ENCODE measurements at regions of chr6 and their contacts with region 1.

Region 1: DNA sequence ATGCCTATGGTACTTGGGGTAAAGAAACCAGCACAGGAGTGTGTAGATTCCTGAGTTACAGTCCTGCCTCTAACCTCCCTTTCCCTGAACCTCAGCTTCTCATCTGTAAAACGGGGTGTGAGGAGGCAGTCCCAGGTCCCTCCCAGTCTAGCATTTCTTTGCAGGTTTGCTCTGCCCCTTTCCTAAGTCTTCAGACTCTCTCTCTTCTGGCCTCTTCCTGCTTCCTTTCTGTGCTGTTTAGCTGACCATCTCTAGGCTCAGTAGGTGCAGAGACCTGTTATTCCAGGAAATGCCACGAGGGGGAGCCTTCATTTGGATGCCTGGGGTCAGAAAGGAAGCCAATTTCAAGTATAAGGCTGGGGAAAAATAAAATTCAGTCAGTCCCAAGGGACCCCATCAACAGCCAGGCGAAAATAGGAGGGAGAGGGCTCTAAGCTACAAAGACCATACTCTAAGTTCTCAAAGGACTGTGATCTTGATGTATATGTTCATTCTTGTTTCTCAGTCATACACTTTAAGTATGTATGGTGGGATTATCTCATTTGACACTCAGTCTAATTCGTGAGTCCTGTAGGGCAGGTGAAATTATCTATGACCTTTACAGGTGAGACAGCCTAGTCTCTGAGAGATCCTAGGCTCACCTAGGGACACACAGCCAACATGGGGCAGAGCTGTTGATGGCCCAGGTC is 89.1 kb downstream of the NCR2 start:
- DNase-seq: peak; percentile 95
- H3K4me3 Mint-ChIP-seq: no peak overlapping the region
- H3K27ac Mint-ChIP-seq: no peak overlapping the region
- H3K4me1 Mint-ChIP-seq: peaks cover 2% of the 10 kb centered on the region
- H3K27me3 Mint-ChIP-seq: peaks cover 27% of the 10 kb centered on the region
- CTCF ChIP-seq: peak; percentile 90

Region 2: GRCh38 chr6:41406728-41407489 is 17.6 kb before region 1 on chr6:
- CTCF ChIA-PET with region 1: no interaction called
- intact Hi-C with region 1: no loop called
- DNase-seq: no peak
- H3K4me3 Mint-ChIP-seq: no peak overlapping the region
- H3K27ac Mint-ChIP-seq: no peak overlapping the region
- H3K4me1 Mint-ChIP-seq: no peaks in the 10 kb centered on the region
- H3K27me3 Mint-ChIP-seq: peaks cover 58% of the 10 kb centered on the region
- CTCF ChIP-seq: no peak

Region 3: GRCh38 chr6:41442800-41443501 is 18.4 kb after region 1 on chr6:
- CTCF ChIA-PET with region 1: interaction called, 11 read pairs
- intact Hi-C with region 1: no loop called
- DNase-seq: peak; percentile 61
- H3K4me3 Mint-ChIP-seq: peak overlapping the region; percentile 31
- H3K27ac Mint-ChIP-seq: no peak overlapping the region
- H3K4me1 Mint-ChIP-seq: peaks cover 15% of the 10 kb centered on the region
- H3K27me3 Mint-ChIP-seq: peaks cover 67% of the 10 kb centered on the region
- CTCF ChIP-seq: peak; percentile 82

Region 4: DNA sequence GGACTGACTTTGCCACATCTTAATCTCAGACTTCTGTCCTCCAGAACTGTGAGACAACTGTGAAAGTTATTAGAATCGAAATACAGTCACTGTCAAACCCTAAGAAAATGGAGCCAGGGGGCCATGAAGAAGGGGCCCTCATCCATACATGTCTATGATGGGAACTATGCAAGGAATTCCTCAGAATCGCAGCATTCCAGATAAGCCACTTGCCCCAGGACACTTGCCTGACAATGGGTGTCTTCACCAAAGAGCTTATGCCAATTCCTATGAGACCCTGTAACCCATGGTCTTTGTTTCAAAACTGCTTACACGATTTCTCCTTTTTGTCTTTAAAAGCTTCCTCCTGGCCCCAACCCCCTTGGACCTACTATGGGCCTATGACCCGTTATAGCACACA is 31.3 kb after region 1 on chr6:
- CTCF ChIA-PET with region 1: interaction called, 4 read pairs
- intact Hi-C with region 1: loop called (anchors 1 kb)
- DNase-seq: no peak
- H3K4me3 Mint-ChIP-seq: no peak overlapping the region
- H3K27ac Mint-ChIP-seq: no peak overlapping the region
- H3K4me1 Mint-ChIP-seq: peaks cover 10% of the 10 kb centered on the region
- H3K27me3 Mint-ChIP-seq: peaks cover 8% of the 10 kb centered on the region
- CTCF ChIP-seq: no peak

Region 5: DNA sequence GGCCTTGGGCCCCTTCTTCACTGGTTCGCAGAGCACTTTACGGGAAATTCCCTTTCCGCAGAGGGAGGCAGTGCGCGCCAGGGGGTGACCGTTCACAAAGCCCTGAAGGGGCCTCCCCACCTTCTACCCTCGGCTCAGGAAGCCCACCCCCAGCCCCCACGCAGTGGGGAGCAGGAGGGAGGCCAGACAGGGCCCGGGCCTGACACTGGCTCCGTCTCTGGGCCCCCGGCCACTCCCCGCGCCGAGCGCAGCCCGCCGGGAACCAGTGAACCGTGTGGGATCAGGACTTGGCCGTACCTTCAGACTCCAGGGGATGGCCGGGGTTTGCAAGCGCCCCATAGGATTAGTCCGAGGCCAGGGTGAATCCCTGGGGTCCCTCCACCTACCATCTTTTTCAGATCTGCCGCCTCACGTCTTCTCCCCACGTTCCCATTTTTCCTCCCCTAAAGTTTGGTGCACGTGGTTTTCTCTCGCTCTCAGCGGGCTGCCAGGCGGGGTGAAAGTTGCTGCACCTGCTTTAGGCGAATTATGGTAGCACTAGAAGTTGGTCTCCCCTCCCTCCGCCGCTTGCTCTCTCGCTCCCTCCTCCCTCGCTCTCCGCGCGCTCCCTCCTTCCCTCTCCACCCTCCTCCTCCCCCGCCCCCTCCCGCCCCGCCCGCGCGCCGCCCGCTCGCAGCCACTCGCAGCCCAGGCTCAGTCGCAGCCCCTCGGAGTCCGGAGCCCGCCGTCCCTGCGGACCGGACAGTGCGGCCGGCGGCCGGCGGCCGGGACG is 121.4 kb after region 1 on chr6 and contains the start of gene FOXP4:
- CTCF ChIA-PET with region 1: no interaction called
- intact Hi-C with region 1: loop called (anchors 1 kb)
- DNase-seq: peak; percentile 90
- H3K4me3 Mint-ChIP-seq: peak within 1 kb of the TSS; percentile 81
- H3K27ac Mint-ChIP-seq: peak within 1 kb of the TSS; percentile 70
- H3K4me1 Mint-ChIP-seq: peaks cover 11% of the 10 kb centered on the region
- H3K27me3 Mint-ChIP-seq: no peaks in the 10 kb centered on the region
- CTCF ChIP-seq: no peak
- total RNA-seq, gene FOXP4: 47.8 and 50.9 TPM in 2 replicates

Region 6: GRCh38 chr6:41591859-41592502 is 167.5 kb after region 1 on chr6:
- CTCF ChIA-PET with region 1: interaction called, 3 read pairs
- intact Hi-C with region 1: loop called (anchors 1 kb)
- DNase-seq: peak; percentile 85
- H3K4me3 Mint-ChIP-seq: no peak overlapping the region
- H3K27ac Mint-ChIP-seq: no peak overlapping the region
- H3K4me1 Mint-ChIP-seq: no peaks in the 10 kb centered on the region
- H3K27me3 Mint-ChIP-seq: no peaks in the 10 kb centered on the region
- CTCF ChIP-seq: peak; percentile 96